IMR-90 (cell line): ENCODE measurements at regions of chr14 and their contacts with region 1.

Region 1: DNA sequence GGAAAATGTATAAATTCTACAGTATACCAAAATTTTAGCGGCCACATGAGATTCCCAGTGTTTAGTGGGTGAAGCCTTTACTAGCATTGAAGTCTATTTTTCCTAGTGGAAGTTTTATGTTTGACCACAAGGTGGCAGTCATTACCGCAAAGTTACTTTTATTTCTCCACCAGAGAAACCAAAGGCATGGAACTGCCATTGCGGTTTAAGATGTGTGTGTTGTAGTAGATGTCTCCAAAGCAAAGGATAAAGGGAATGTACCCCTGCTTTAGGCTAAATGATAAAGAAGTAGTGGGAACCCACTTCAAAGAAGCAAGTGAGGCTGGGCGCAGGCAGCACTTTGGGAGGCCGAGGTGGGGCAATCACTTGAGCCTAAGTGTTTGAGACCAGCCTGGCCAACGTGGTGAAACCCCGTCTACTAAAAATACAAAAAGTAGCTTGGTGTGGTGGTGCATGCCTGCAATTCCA is 140.5 kb downstream of the PRKCH start:
- DNase-seq: peak; percentile 77
- ATAC-seq: peak; percentile 49
- H3K4me3 ChIP-seq: no peak overlapping the region
- H3K27ac ChIP-seq: peak overlapping the region; percentile 61; the same call in 1 of the 2 replicates
- H3K4me1 ChIP-seq: peaks cover 20% of the 10 kb centered on the region
- H3K27me3 ChIP-seq: no peaks in the 10 kb centered on the region
- CTCF ChIP-seq: peak; percentile 77
- POLR2A ChIP-seq: peak; percentile 39; the same call in 1 of the 2 replicates
- RAD21 ChIP-seq: peak; percentile 94

Region 2: DNA sequence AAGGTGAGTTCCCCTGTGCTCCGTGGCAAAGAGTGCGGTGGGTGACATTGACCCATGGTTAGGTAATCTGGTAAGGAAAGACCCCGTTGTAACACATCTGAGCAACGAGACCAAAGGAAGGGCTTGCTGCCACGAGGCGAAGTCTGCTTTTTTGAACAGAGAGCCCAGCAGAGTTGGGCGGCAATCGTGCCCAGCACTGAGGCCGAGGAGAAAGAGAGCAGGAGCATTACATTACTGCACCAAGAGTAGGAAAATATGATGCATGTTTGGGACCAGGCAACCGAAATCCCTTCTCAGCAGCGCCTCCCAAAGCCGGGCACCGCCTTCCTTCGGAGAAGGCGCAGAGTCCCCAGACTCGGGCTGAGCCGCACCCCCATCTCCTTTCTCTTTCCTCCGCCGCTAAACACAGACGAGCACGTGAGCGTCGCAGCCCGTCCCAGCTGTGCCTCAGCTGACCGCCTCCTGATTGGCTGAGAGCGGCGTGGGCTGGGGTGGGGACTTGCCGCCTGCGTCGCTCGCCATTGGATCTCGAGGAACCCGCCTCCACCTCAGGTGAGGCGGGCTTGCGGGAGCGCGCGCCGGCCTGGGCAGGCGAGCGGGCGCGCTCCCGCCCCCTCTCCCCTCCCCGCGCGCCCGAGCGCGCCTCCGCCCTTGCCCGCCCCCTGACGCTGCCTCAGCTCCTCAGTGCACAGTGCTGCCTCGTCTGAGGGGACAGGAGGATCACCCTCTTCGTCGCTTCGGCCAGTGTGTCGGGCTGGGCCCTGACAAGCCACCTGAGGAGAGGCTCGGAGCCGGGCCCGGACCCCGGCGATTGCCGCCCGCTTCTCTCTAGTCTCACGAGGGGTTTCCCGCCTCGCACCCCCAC is 233.2 kb after region 1 on chr14 and contains the start of gene HIF1A:
- CTCF ChIA-PET with region 1: no interaction called
- POLR2A ChIA-PET with region 1: interaction called, 3 read pairs
- dilution Hi-C with region 1: loop called (anchors 25 kb)
- in situ Hi-C with region 1: no loop called
- intact Hi-C with region 1: loop called (anchors 1 kb)
- DNase-seq: peak; percentile 99
- ATAC-seq: peak; percentile 94
- H3K4me3 ChIP-seq: peak within 1 kb of the TSS; percentile 94
- H3K27ac ChIP-seq: peak within 1 kb of the TSS; percentile 90
- H3K4me1 ChIP-seq: no peaks in the 10 kb centered on the region; the same call in none of the 2 replicates
- H3K27me3 ChIP-seq: no peaks in the 10 kb centered on the region
- CTCF ChIP-seq: peak; percentile 30; the same call in 1 of the 2 replicates
- POLR2A ChIP-seq: peak; percentile 97
- RAD21 ChIP-seq: peak; percentile 48
- total RNA-seq, gene HIF1A: 301 and 493 TPM in 2 replicates

Region 3: DNA sequence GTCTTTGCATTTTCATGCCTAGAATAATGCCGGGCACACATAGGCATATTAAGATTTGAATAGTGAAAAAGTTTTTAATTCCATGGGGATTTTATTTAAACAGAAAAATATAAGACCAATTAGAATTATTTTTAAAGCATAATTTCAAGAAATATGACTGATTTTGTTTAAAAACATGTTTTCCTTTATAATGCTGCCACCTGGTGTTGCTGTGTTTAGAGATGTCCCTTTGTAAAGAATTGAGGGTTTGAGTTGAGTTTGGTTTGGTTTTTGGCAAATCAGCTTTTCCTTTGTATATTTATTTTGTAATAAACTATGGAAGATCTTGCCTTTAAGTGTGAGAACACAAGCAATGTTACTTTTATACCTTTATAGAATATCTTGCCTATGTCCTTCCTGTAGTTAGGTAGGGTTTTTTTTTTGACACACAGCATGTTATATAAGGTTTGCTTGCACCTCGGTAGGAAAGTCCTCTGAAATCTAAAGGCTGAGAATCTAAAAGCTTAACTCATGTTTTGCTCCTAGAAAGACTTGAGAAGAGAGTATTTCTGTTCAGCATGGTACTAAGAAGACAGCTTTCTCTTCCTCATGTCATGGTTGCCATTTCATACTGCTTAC is 269.0 kb after region 1 on chr14:
- CTCF ChIA-PET with region 1: no interaction called
- POLR2A ChIA-PET with region 1: no interaction called
- dilution Hi-C with region 1: no loop called
- in situ Hi-C with region 1: loop called (anchors 5 kb)
- intact Hi-C with region 1: loop called (anchors 2 kb)
- DNase-seq: no peak
- ATAC-seq: no peak
- H3K4me3 ChIP-seq: no peak overlapping the region
- H3K27ac ChIP-seq: no peak overlapping the region
- H3K4me1 ChIP-seq: no peaks in the 10 kb centered on the region
- H3K27me3 ChIP-seq: no peaks in the 10 kb centered on the region
- CTCF ChIP-seq: peak; percentile 30
- POLR2A ChIP-seq: no peak
- RAD21 ChIP-seq: peak; percentile 50

Region 4: DNA sequence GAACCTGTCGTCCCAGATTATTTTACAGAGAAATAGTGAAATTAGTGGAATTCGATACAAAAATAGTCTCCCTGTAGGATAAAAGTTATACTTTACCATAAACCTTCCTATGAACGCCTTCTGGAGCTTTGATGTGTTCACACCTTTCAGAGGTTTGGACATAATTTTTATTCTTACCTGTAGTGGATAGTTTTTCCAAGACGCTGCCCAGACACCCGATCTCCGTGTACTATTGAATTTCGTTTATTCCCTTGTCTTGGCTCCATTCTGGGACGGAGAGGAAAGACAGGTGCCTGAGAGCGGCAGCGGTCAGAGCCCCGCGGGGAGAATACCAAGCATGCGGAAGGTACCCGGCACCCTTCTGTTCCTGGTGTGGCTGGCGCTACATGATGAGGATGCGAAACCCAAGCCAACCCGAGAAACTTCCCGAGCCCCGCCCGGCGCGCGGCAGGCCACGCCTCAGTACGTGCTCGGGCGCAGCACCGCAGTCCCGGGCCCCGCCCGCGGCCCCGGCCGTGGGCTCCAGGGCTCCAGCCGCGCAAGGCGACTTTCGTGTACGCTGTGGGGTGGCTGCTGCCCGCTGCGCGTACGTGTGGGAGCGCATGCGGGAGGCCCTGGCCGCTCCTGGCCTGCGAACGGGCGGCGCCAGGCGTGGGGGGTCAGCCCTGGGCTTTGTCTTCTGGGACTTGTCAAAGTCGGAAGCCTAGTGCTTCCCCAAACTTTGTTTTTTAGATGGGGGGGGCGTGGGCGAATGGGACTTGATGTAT is 289.0 kb after region 1 on chr14:
- CTCF ChIA-PET with region 1: no interaction called
- POLR2A ChIA-PET with region 1: no interaction called
- dilution Hi-C with region 1: no loop called
- in situ Hi-C with region 1: no loop called
- intact Hi-C with region 1: loop called (anchors 2 kb)
- DNase-seq: peak; percentile 59
- ATAC-seq: peak; percentile 61
- H3K4me3 ChIP-seq: peak overlapping the region; percentile 86; the same call in 1 of the 2 replicates
- H3K27ac ChIP-seq: peak overlapping the region; percentile 88
- H3K4me1 ChIP-seq: peaks cover 13% of the 10 kb centered on the region
- H3K27me3 ChIP-seq: no peaks in the 10 kb centered on the region
- CTCF ChIP-seq: no peak
- POLR2A ChIP-seq: no peak; the same call in 1 of the 2 replicates
- RAD21 ChIP-seq: no peak